Mammary epithelial cell (primary cell): ENCODE measurements at regions of chr3 and their contacts with region 1.

Region 1: DNA sequence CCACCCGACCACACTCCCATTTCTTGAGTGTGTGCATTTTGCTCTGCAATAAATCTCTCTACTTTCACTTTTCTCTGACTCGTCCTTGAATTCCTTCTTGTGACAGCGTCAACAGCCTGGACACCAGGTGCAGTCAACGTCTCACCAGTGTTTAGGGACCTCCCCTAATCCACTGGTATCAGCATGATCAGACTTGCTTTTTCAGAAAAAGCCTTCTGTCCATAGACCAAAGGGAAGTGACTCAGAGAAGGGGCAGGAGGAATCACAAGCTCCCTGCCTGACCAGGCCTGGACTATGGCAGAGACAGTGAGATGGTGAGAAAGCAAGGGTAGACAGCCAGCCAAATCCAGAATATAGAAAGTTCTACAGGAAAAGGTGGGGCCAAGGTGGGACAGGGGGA is 15.5 kb downstream of the CCR5 start:
- DNase-seq: peak; percentile 99
- H3K4me3 ChIP-seq: peak overlapping the region in 1 of 3 experiments; percentile 6
- H3K27ac ChIP-seq: peak overlapping the region; percentile 64
- H3K4me1 ChIP-seq: peaks cover 20% of the 10 kb centered on the region
- H3K27me3 ChIP-seq: no peaks in the 10 kb centered on the region
- CTCF ChIP-seq: no peak

Region 2: GRCh38 chr3:46422617-46423016 is 36.4 kb after region 1 on chr3:
- CTCF ChIA-PET with region 1: no interaction called
- dilution Hi-C with region 1: no loop called
- in situ Hi-C with region 1: no loop called
- intact Hi-C with region 1: loop called (anchors 1 kb)
- DNase-seq: peak; percentile 93
- H3K4me3 ChIP-seq: no peak overlapping the region
- H3K27ac ChIP-seq: peak overlapping the region; percentile 23
- H3K4me1 ChIP-seq: peaks cover 42% of the 10 kb centered on the region
- H3K27me3 ChIP-seq: no peaks in the 10 kb centered on the region
- CTCF ChIP-seq: no peak

Region 3: DNA sequence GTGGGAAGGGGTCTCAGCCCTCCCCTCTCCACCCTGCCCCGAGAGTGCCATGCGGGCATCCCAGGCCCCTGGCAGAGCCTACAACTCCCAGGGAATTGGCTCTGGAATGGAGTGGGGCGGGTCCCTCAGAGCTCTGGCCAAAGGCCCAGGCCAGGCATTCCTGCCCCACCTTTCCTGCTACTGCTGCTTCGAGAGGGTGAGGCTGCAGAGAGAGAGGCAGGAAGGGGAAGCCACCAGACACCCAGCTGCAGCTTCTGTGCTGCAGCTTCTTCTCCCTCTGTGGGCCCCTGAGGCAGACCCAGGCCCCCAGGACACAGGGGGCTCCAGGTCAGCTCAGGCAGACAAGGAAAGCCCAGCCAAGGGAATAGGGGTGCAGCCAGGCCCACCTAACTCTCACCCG is 304.6 kb after region 1 on chr3:
- CTCF ChIA-PET with region 1: no interaction called
- dilution Hi-C with region 1: no loop called
- in situ Hi-C with region 1: no loop called
- intact Hi-C with region 1: no loop called
- DNase-seq: peak; percentile 54
- H3K4me3 ChIP-seq: peak overlapping the region in 2 of 3 experiments; percentile 25 to 31
- H3K27ac ChIP-seq: peak overlapping the region; percentile 89
- H3K4me1 ChIP-seq: peaks cover 40% of the 10 kb centered on the region
- H3K27me3 ChIP-seq: no peaks in the 10 kb centered on the region
- CTCF ChIP-seq: no peak